ENCODE measurements at regions of chr2 and their contacts with region 1.

Region 1: DNA sequence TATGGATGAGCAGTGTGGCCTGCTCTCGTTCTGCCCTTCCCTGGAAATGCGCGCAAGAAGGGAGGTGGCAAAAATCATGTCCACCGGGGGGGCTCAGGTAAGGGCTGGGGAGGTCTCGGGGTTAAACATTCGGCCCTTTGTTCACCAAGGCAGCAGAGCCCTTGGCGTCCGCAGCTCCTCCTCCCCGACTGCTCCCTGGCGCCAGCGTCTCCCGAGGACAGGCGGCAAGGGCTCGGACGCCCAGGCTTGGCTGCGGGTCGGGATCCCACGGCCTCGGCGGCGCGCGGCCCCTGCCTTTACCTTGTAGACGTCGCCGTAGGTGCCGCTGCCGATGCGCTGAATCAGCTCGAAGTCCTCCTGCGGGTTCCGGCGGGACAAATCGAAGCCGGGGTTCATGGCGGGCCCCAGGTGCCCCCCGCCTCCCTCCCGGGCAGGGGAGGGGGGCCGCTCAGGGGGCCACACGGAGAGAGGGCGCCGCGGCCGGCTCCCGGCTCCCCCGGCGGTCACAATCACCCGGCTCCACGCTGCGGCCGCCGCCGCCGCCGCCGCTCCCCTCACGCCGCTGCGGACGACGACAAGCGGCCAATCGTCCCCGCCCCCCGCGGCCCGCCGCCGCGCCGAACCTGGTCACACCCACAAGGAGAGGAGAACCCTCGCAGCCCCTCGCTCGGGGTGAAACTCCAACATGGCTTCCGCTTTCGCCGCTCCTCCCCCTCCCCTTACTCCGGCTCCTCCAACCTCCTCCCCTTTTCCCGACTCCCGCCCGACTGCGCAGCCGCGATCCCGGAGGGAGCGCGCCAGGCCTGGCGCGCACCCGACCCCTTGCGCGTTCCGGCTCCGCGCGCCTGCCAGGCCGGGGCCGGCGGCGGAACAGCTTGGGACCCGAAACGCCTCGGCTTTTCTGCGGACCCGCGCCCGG is at the start of gene MAP4K3:
- DNase-seq: peak; percentile 95 to 96 (median 95)
- ATAC-seq: peak; percentile 79 to 94 (median 92)
- H3K4me3 ChIP-seq: peak within 1 kb of the TSS; percentile 71 to 96 (median 88)
- H3K27ac ChIP-seq: peak within 1 kb of the TSS; percentile 90 to 99 (median 97)
- H3K4me1 ChIP-seq: peaks cover 3 to 66% (median 47%) of the 10 kb centered on the region in 12 donors
- H3K27me3 ChIP-seq: no peaks in the 10 kb centered on the region
- CTCF ChIP-seq: peak in 1 of 12 donors; percentile 2
- POLR2A ChIP-seq: peak; percentile 26 to 92
- total RNA-seq, gene MAP4K3: 26.2 to 45.4 (median 33.7) TPM

Region 2: DNA sequence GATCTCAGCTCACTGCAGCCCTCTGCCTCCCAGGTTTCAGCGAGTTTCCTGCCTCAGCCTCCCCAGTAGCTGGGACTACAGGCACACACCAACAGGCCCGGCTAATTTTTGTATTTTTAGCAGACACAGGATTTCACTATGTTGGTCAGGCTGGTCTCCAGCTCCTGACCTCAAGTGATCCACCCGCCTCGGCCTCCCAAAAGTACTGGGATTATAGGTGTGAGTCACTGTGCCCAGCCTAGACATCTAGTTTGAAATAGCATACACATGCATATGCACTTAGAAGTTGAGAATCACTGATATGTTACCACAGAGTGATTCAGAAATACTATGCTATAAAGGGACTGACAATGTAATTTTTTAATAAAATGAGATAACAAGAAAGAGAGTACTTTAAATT is 123.3 kb before region 1 on chr2:
- intact Hi-C with region 1: loop called in 1 of 10 experiments (anchors 10 kb)
- DNase-seq: no peak
- ATAC-seq: no peak
- H3K4me3 ChIP-seq: no peak overlapping the region
- H3K27ac ChIP-seq: no peak overlapping the region
- H3K4me1 ChIP-seq: no peaks in the 10 kb centered on the region
- H3K27me3 ChIP-seq: no peaks in the 10 kb centered on the region
- CTCF ChIP-seq: no peak
- POLR2A ChIP-seq: no peak

Region 3: DNA sequence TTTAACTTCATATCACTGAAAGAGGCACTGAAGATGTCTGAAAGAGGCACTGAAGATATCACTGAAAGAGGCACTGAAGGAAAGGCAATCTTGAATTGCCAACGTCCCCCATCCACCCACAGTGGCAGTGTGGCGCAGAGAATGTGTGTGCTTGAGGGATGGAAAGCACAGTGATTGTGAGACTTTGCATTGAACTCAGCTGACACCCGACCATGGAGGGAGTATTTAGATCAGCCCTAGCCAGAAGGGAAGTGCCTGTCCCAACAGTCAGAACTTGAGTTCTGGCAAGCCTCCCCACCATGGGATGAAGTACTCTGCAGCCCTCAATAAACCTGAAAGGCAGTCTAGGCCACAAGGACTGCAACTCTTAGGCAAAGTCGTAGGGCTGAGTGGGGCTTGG is 33.5 kb before region 1 on chr2:
- intact Hi-C with region 1: loop called in 2 of 10 experiments (anchors 5 kb)
- DNase-seq: peak in 3 of 5 donors; percentile 21 to 50 (median 46)
- ATAC-seq: peak; percentile 68 to 80 (median 72)
- H3K4me3 ChIP-seq: no peak overlapping the region
- H3K27ac ChIP-seq: peak overlapping the region in 3 of 12 donors; percentile 2 to 39 (median 7)
- H3K4me1 ChIP-seq: peaks cover 8 to 98% (median 82%) of the 10 kb centered on the region in 12 donors
- H3K27me3 ChIP-seq: no peaks in the 10 kb centered on the region
- CTCF ChIP-seq: no peak
- POLR2A ChIP-seq: no peak

Region 4: DNA sequence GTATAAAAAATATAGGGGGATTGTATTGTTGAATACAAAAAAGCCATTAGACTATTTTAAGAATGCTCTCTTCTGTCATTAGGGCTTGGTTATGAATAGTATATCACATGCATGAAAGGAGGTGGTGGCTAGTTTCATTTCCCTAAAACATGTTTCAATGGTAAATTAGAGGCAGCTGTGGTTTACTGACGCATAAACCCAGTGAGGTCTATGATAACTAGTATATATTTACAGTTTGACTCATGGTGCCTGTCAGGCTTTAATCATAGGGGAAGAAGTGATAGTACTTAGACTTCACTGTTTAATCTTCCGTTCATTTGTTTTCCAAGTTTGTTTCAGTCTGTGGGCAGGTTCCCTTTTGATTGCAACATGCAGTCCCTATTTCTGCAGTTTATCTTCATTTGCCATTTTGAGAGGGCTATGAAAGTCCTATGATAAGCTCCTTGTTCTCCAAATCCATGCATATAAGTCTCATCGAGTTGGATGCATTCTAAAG is 55.3 kb after region 1 on chr2:
- intact Hi-C with region 1: loop called in 2 of 10 experiments (anchors 5 to 10 kb)
- DNase-seq: no peak
- ATAC-seq: peak; percentile 70 to 88 (median 84)
- H3K4me3 ChIP-seq: peak overlapping the region in 1 of 12 donors; percentile 5
- H3K27ac ChIP-seq: peak overlapping the region; percentile 5 to 91 (median 60)
- H3K4me1 ChIP-seq: peaks cover 0 to 65% (median 25%) of the 10 kb centered on the region in 12 donors
- H3K27me3 ChIP-seq: no peaks in the 10 kb centered on the region
- CTCF ChIP-seq: no peak
- POLR2A ChIP-seq: no peak

Region 5: GRCh38 chr2:39513641-39514094 is 76.8 kb after region 1 on chr2:
- intact Hi-C with region 1: loop called in 5 of 10 experiments (anchors 5 kb)
- DNase-seq: peak in 4 of 5 donors; percentile 62 to 77 (median 70)
- ATAC-seq: peak; percentile 36 to 77 (median 76)
- H3K4me3 ChIP-seq: no peak overlapping the region
- H3K27ac ChIP-seq: peak overlapping the region in 11 of 12 donors; percentile 38 to 89 (median 76)
- H3K4me1 ChIP-seq: peaks cover 16 to 100% (median 85%) of the 10 kb centered on the region in 12 donors
- H3K27me3 ChIP-seq: no peaks in the 10 kb centered on the region
- CTCF ChIP-seq: peak; percentile 51 to 78 (median 62)
- POLR2A ChIP-seq: no peak

Region 6: DNA sequence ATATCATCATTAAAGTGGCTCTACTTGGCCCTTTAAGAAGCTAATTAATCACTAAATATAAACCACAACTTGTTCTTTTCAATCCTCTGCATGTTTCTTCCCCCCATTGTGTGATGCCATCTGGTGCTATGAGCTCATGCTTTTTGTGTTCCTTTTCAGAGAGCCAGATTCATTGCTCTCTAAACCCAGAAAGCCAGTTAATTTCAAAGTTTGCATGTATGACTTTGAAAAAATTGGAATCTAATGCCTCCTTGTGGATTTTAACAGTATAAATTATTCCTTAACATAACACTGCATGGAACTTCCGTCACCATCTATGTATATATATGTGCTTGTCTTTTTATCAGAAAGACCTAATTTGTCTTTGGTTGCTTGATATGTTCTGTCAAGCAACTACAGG is 260.0 kb after region 1 on chr2:
- intact Hi-C with region 1: loop called in 1 of 10 experiments (anchors 5 kb)
- DNase-seq: no peak
- ATAC-seq: peak; percentile 47 to 77 (median 70)
- H3K4me3 ChIP-seq: no peak overlapping the region
- H3K27ac ChIP-seq: peak overlapping the region in 11 of 12 donors; percentile 33 to 60 (median 47)
- H3K4me1 ChIP-seq: peaks cover 0 to 31% (median 14%) of the 10 kb centered on the region in 12 donors
- H3K27me3 ChIP-seq: no peaks in the 10 kb centered on the region
- CTCF ChIP-seq: peak; percentile 19 to 67 (median 56)
- POLR2A ChIP-seq: no peak